T-cell (primary cell): ENCODE measurements at regions of chr9 and their contacts with region 1.

Region 1: GRCh38 chr9:123431581-123431980 is 75.6 kb downstream of the CRB2 start:
- DNase-seq: no peak
- ATAC-seq: no peak
- H3K4me3 ChIP-seq: no peak overlapping the region
- H3K4me3 Mint-ChIP-seq: no peak overlapping the region
- H3K27ac ChIP-seq: no peak overlapping the region
- H3K27ac Mint-ChIP-seq: no peak overlapping the region
- H3K4me1 ChIP-seq: no peaks in the 10 kb centered on the region
- H3K4me1 Mint-ChIP-seq: no peaks in the 10 kb centered on the region
- H3K27me3 ChIP-seq: no peaks in the 10 kb centered on the region
- H3K27me3 Mint-ChIP-seq: no peaks in the 10 kb centered on the region

Region 2: DNA sequence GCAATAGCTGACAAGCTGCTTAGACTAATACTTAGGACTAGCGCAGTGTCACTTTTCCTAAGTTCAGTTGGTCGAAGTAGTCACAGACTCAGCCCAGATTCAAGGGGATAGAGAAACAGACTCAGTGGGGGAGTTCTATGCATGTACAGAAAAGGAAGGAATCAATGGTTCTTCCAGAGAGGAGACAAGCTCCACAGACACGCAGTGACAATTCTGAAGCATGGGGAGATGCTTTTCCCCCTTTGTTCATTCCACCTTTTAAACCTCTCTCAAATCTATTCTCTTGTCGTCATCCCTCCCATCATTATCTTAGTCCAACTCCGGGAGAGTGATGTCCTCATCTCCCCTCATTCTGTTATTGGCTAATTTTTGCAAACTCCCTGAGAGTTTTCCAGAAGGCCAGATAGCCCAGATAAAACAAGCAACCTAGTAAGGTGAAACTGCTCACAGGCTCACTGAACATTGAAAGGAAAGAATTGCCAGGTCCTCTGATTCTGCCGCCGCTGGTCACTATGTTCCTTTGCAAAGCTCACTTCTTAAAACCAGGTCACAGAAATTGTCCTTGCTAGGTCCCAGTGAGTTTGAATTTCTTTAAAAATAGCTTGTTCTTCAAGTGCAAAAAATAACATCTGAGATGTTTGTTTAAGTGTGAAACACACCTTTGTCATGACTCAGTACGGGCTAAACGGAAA is 149.8 kb before region 1 on chr9:
- CTCF ChIA-PET with region 1: no interaction called
- POLR2A ChIA-PET with region 1: interaction called in 1 of 2 experiments, 12 read pairs
- DNase-seq: no peak
- ATAC-seq: no peak
- H3K4me3 ChIP-seq: no peak overlapping the region
- H3K4me3 Mint-ChIP-seq: no peak overlapping the region
- H3K27ac ChIP-seq: no peak overlapping the region
- H3K27ac Mint-ChIP-seq: no peak overlapping the region
- H3K4me1 ChIP-seq: no peaks in the 10 kb centered on the region
- H3K4me1 Mint-ChIP-seq: peaks cover 0 to 5% (median 0%) of the 10 kb centered on the region in 3 donors
- H3K27me3 ChIP-seq: peaks cover 0 to 7% of the 10 kb centered on the region in 2 experiments
- H3K27me3 Mint-ChIP-seq: peaks cover 0 to 3% of the 10 kb centered on the region in 2 donors

Region 3: GRCh38 chr9:123825342-123826060 is 393.9 kb after region 1 on chr9:
- CTCF ChIA-PET with region 1: no interaction called
- POLR2A ChIA-PET with region 1: no interaction called
- DNase-seq: no peak
- ATAC-seq: no peak
- H3K4me3 ChIP-seq: no peak overlapping the region
- H3K4me3 Mint-ChIP-seq: no peak overlapping the region
- H3K27ac ChIP-seq: no peak overlapping the region
- H3K27ac Mint-ChIP-seq: no peak overlapping the region
- H3K4me1 ChIP-seq: no peaks in the 10 kb centered on the region
- H3K4me1 Mint-ChIP-seq: peaks cover 2 to 12% (median 2%) of the 10 kb centered on the region in 3 donors
- H3K27me3 ChIP-seq: no peaks in the 10 kb centered on the region
- H3K27me3 Mint-ChIP-seq: no peaks in the 10 kb centered on the region